Cardiac septum (tissue), 1 donor: ENCODE measurements at regions of chr15 and their contacts with region 1.

Region 1: GRCh38 chr15:85582131-85583079 is 202.0 kb downstream of the AKAP13 start:
- DNase-seq: peak; percentile 91

Region 2: DNA sequence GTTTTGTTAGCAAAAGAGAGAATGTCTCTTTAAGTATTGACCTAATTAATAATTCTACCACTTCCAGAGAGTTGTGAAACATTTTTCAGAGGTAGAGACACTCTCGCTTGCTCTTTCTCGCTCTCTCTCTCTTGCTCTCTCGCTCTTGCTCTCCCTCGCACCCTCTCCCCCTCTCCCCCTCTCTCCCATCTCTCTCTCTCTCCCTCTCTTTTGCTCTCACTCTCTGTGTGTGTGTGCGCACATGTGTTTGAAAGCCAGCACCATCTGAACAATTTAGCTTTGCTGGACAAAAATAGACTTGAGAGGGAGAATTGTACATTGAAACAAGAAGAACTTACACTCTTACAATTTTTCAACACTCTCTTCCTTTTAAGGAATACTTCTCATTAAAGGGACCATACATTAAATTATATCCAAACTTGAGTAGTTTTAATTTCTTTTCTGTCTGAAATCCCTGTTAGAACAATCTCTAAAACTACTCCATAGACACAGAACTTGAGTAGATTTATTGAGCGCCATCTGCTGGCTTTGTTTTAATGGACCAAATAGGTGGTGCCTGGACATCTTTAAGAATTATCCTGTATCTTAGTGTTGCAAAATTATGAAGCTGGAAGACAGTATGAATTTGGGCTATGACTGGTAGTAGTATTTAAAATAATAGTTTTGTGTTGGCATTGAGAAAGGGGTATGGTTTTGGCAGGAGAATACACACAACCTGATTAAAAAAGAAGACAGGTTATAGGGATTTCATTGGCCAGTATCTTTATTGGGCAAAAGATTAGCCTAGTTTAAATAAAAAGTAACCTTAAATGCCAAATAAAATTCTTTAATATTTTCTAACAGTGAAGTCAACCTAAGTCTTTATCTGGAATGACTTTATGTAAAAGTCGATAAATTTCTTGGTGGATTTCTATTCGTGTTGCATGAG is 77.4 kb before region 1 on chr15:
- intact Hi-C with region 1: loop called (anchors 5 kb)
- DNase-seq: no peak

Region 3: GRCh38 chr15:85597155-85597815 is 14.9 kb after region 1 on chr15:
- intact Hi-C with region 1: no loop called
- DNase-seq: no peak

Region 4: DNA sequence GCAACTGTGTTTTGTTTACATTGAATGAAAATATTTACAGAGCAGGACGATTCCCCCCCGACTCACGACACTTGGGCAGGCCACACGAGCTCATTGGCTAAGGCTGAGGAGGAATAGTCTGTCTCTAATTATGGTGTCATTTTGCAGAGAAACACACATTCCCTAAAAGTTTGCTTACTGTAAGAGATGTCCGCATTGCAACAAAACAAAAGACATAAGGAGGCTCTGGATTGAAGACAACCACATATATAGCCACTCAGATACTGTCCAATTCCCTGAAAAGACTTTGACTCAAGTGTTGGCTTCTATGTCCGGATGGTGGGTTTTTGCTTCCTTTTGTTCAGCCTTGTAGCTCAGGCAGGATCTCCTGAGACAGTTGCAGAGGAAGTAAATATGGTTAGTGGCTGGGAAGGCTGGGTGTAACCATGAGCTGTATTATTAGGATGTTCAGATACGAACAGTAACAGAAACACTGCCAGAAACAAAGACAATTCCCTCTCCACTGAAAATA is 41.9 kb after region 1 on chr15:
- intact Hi-C with region 1: loop called (anchors 5 kb)
- DNase-seq: no peak

Region 5: DNA sequence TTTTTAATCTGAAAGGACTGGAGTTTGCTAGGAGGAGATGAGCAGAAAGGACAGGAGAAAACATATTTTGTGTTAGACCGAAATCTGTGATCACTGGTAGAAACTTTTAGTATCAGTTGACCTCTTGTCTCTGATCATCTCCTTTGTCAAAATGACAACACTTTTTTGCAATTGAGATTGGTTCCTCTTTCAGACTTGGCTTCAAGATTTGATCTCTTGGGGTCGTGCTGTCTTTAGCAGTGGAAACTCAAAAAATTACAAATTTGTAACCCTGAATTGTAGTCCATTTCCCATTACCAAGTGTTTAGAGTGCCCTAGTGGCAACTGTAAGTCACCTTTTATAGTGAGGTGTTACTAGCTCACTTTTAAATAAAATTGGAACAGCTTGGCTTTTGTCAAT is 104.9 kb after region 1 on chr15:
- intact Hi-C with region 1: no loop called
- DNase-seq: no peak